Naive thymus-derived CD4-positive, alpha-beta T cell (primary cell): ENCODE measurements at regions of chr21 and their contacts with region 1.

Region 1: GRCh38 chr21:24265987-24266386 is 1341.3 kb downstream of the MRPL39 start:
- DNase-seq: no peak
- ATAC-seq: no peak
- H3K4me3 ChIP-seq: no peak overlapping the region
- H3K4me3 Mint-ChIP-seq: no peak overlapping the region
- H3K27ac ChIP-seq: no peak overlapping the region
- H3K27ac Mint-ChIP-seq: no peak overlapping the region
- H3K4me1 ChIP-seq: no peaks in the 10 kb centered on the region
- H3K4me1 Mint-ChIP-seq: peaks cover 0 to 4% (median 0%) of the 10 kb centered on the region in 7 donors
- H3K27me3 ChIP-seq: no peaks in the 10 kb centered on the region
- H3K27me3 Mint-ChIP-seq: no peaks in the 10 kb centered on the region

Region 2: GRCh38 chr21:24280596-24280995 is 14.6 kb after region 1 on chr21:
- CTCF ChIA-PET with region 1: no interaction called
- POLR2A ChIA-PET with region 1: no interaction called
- intact Hi-C with region 1: loop called in 1 of 2 experiments (anchors 2 kb)
- DNase-seq: no peak
- ATAC-seq: no peak
- H3K4me3 ChIP-seq: no peak overlapping the region
- H3K4me3 Mint-ChIP-seq: no peak overlapping the region
- H3K27ac ChIP-seq: no peak overlapping the region
- H3K27ac Mint-ChIP-seq: no peak overlapping the region
- H3K4me1 ChIP-seq: no peaks in the 10 kb centered on the region
- H3K4me1 Mint-ChIP-seq: no peaks in the 10 kb centered on the region
- H3K27me3 ChIP-seq: no peaks in the 10 kb centered on the region
- H3K27me3 Mint-ChIP-seq: no peaks in the 10 kb centered on the region